Heart left ventricle (tissue), 16 donors: ENCODE measurements at regions of chr10 and their contacts with region 1.

Region 1: DNA sequence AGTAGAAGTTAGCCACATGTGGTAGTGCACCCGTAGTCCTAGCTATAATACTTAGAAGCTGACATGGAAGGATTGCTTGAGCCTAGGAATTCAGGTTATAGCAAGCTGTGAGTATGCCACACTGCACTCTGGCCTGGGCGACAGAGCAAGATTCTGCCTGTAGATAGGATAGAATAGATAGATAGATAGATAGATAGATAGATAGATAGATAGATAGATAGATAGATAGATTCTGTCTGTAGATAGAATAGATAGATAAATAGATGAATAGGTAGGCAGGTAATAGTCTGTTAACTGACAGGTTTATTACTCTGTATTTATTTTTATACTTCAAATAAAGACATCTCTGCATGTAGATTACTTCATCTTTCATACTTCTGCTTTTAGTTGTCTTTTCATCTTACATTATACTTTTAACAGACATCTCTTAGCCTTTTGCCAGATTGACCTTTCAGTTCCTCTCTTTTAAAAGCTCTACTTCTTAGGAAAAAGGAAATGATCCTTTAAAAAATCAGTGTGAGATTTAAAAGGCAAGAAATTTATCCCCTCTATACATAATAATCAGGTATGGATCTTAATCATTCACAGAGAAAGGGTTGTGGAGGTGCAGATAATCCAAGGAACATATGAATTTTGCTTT is 31.8 kb downstream of the CCAR1 start:
- DNase-seq: no peak
- ATAC-seq: no peak
- H3K4me3 ChIP-seq: no peak overlapping the region
- H3K27ac ChIP-seq: no peak overlapping the region
- H3K4me1 ChIP-seq: peaks cover 0 to 3% (median 0%) of the 10 kb centered on the region in 12 donors
- H3K27me3 ChIP-seq: no peaks in the 10 kb centered on the region
- CTCF ChIP-seq: no peak
- POLR2A ChIP-seq: no peak

Region 2: DNA sequence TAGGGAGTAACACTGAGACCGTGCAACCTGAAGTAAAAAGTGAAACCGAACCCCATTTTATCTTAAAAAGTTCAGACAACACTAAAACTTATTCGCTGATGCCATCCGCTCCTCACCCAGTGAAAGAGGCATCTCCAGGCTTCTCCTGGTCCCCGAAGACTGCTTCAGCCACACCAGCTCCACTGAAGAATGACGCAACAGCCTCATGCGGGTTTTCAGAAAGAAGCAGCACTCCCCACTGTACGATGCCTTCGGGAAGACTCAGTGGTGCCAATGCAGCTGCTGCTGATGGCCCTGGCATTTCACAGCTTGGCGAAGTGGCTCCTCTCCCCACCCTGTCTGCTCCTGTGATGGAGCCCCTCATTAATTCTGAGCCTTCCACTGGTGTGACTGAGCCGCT is 62.0 kb before region 1 on chr10:
- intact Hi-C with region 1: no loop called
- DNase-seq: no peak
- ATAC-seq: no peak
- H3K4me3 ChIP-seq: no peak overlapping the region
- H3K27ac ChIP-seq: no peak overlapping the region
- H3K4me1 ChIP-seq: no peaks in the 10 kb centered on the region
- H3K27me3 ChIP-seq: no peaks in the 10 kb centered on the region
- CTCF ChIP-seq: no peak
- POLR2A ChIP-seq: no peak

Region 3: DNA sequence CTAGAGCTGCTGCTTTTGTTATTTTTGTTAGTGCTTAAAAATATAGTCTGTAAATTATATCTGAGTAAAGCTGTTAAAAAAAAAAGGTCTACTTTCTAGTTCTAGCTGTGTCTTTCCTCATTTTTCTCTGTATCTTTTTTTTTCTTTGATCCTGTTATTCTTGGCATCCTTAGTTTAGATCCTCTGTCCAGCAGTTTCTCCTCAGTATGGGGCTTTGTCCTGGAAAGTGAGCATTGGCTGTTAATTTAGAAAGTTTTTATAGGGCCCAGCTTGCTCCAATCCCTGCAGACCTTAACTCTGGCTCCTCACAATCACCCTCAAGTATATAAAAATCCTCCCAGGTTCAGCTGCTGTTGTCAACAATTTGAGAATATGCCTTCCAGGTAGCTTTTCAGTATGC is 171.8 kb after region 1 on chr10:
- intact Hi-C with region 1: loop called in 1 of 10 experiments (anchors 10 kb)
- DNase-seq: no peak
- ATAC-seq: no peak
- H3K4me3 ChIP-seq: no peak overlapping the region
- H3K27ac ChIP-seq: no peak overlapping the region
- H3K4me1 ChIP-seq: peaks cover 0 to 6% (median 0%) of the 10 kb centered on the region in 12 donors
- H3K27me3 ChIP-seq: no peaks in the 10 kb centered on the region
- CTCF ChIP-seq: no peak
- POLR2A ChIP-seq: no peak